ENCODE measurements at regions of chr11 and their contacts with region 1.

Region 1: GRCh38 chr11:119474682-119475596 is 52.0 kb upstream of the THY1 start:
- DNase-seq: peak; percentile 59 to 91
- H3K4me3 ChIP-seq: no peak overlapping the region
- H3K27ac ChIP-seq: peak overlapping the region in 2 of 5 donors; percentile 44 to 57
- H3K4me1 ChIP-seq: peaks cover 0 to 10% (median 4%) of the 10 kb centered on the region in 4 donors
- H3K27me3 ChIP-seq: peaks cover 0 to 14% (median 0%) of the 10 kb centered on the region in 3 donors
- CTCF ChIP-seq: peak in 5 of 7 experiments; percentile 71 to 84 (median 82)
- EP300 ChIP-seq: no peak
- POLR2A ChIP-seq: no peak

Region 2: GRCh38 chr11:119306373-119306890 is 168.5 kb before region 1 on chr11:
- intact Hi-C with region 1: no loop called
- DNase-seq: peak in 1 of 2 donors; percentile 52
- H3K4me3 ChIP-seq: no peak overlapping the region
- H3K27ac ChIP-seq: peak overlapping the region in 4 of 5 donors; percentile 48 to 95 (median 74)
- H3K4me1 ChIP-seq: peaks cover 0 to 42% (median 15%) of the 10 kb centered on the region in 4 donors
- H3K27me3 ChIP-seq: no peaks in the 10 kb centered on the region
- CTCF ChIP-seq: no peak
- EP300 ChIP-seq: no peak
- POLR2A ChIP-seq: no peak

Region 3: DNA sequence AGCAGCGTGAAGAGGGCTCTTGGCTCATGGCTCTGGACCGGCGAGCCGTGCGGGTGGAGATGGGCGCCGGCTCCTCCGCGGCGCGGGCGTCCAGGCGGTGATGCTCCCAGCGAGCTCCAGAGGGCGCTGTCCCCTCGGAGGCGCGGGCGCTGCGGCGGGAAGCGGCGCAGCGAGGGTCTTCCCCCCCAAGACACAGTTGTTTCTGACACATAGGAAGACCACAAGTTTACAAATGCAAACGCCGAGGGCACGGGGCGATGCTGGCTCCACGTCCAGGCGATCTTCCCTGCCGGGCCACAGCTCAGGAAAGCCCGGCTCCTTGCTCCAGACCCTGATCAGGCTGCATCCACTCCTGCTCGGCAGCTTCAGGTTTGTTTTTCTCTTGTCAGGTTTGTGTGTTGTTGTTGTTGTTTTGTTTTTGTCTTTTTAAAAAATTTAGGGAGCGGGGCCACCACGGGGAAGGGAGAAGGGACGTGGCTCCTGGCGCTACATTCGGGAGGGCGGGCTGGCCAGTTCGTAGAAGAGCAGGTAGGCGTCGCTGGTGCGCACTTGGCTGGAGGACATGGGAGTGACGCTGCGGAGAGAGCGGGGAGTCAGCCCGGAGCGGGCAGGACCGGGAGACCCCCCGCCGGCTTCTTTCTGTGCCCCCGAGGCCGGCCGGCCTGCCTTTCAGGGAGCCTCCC is 118.4 kb before region 1 on chr11:
- intact Hi-C with region 1: loop called (anchors 10 kb)
- DNase-seq: peak; percentile 85 to 95
- H3K4me3 ChIP-seq: peak overlapping the region; percentile 41 to 53 (median 51)
- H3K27ac ChIP-seq: peak overlapping the region; percentile 42 to 88 (median 68)
- H3K4me1 ChIP-seq: peaks cover 12 to 45% (median 33%) of the 10 kb centered on the region in 4 donors
- H3K27me3 ChIP-seq: peaks cover 0 to 4% (median 0%) of the 10 kb centered on the region in 3 donors
- CTCF ChIP-seq: peak in 5 of 7 experiments; percentile 74 to 93 (median 77)
- EP300 ChIP-seq: no peak
- POLR2A ChIP-seq: no peak

Region 4: DNA sequence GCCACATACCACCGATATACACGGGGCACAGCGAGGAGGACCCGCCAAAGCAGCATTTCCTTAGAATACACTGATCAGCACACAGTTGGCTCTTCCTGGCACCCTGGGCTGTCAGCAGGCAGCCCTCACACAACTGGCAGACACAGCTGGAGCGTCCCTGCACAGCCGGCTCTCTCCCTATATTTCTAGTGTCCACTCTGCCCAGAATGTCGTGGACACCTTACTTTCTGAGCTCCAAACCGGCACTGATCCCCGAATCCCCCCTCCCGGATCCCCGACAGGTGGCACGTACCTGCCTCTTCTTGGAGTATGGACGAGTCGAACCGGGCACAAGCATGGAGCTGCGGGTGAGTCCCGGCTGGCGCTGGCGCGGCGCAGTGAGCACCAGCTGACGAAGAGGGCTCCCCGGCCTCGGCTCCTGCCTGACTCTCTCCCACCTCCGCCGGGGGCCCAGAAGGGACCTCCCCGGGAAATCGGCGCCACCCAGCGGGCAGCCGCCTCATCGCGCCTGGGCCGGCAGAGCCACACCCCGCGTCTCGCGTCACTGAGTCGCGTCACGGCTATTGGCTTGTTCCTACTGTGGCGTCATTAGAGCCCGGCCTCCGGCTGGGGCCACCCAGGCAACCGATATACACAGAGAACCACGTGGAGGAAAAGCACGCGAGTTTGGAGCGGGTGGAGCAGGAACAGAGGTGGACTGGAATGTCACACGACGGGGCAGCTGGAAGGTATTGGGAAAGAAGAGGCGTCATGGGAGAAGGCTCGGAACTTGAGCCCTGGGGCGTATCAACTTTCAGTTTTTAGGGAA is 93.6 kb before region 1 on chr11 and contains the start of gene USP2:
- intact Hi-C with region 1: loop called (anchors 10 kb)
- DNase-seq: peak; percentile 98 to 99
- H3K4me3 ChIP-seq: peak within 1 kb of the TSS; percentile 47 to 57 (median 51)
- H3K27ac ChIP-seq: peak within 1 kb of the TSS in 3 of 5 donors; percentile 66 to 85 (median 71)
- H3K4me1 ChIP-seq: peaks cover 20 to 55% (median 37%) of the 10 kb centered on the region in 4 donors
- H3K27me3 ChIP-seq: no peaks in the 10 kb centered on the region
- CTCF ChIP-seq: peak in 5 of 7 experiments; percentile 84 to 93 (median 92)
- EP300 ChIP-seq: peak; percentile 69
- POLR2A ChIP-seq: peak in 1 of 4 donors; percentile 21
- total RNA-seq, gene USP2: 1.4 to 17.4 (median 3.1) TPM

Region 5: GRCh38 chr11:119533921-119534736 is 59.2 kb after region 1 on chr11:
- intact Hi-C with region 1: no loop called
- DNase-seq: peak; percentile 83 to 86
- H3K4me3 ChIP-seq: no peak overlapping the region
- H3K27ac ChIP-seq: no peak overlapping the region
- H3K4me1 ChIP-seq: peaks cover 0 to 23% (median 5%) of the 10 kb centered on the region in 4 donors
- H3K27me3 ChIP-seq: peaks cover 0 to 8% (median 0%) of the 10 kb centered on the region in 3 donors
- CTCF ChIP-seq: peak in 5 of 7 experiments; percentile 57 to 85 (median 72)
- EP300 ChIP-seq: no peak
- POLR2A ChIP-seq: no peak

Measured in stomach (tissue), 19 donors.